Endothelial cell of umbilical vein (primary cell): ENCODE measurements at regions of chr20 and their contacts with region 1.

Region 1: DNA sequence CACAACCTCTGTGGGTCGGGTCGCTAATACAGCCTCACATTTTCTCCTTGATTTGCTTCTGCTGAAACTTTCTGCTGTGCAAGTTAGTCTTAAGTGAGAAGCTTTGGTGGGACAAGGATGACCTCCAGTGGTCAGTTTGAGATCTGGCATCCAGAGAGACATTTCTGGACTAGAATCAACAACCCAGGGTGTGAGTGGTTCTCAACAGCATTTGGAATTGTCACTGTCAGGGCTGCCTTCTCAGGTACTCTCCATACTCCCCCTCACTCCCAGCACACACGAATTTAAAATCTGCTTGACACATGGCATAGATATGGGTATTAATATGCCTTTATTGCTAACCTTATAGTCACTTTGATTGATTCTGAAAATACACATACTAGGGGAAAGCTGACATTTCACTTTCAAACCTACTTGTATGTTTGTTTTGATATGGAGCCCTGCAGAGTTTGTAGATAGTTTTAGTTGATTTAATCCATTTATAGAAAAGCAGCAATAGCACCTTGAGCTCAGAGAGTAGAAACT is 13.2 kb downstream of the OTOR start:
- DNase-seq: peak; percentile 65
- H3K4me3 ChIP-seq: no peak overlapping the region
- H3K27ac ChIP-seq: no peak overlapping the region
- H3K4me1 ChIP-seq: no peaks in the 10 kb centered on the region
- H3K27me3 ChIP-seq: no peaks in the 10 kb centered on the region
- CTCF ChIP-seq: peak; percentile 60 to 64
- POLR2A ChIP-seq: no peak

Region 2: DNA sequence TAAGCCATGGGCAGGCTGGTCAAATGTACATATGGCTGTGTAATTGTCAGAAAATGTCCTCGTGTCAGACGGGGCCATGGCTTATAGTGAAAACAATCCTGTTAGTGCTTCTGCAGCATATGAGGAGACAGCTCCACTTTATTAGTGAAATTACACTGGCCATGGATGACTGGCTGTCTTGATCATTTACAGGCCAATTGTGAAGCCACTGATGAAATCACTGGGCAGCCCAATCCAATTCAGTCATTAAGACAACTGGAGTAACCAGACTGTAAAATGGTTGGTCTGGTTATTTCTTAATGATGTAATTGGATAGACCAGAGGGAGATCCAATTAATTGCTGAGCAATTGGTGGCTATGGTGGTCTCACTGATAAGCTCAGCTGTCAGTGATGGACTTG is 937.6 kb before region 1 on chr20:
- CTCF ChIA-PET with region 1: no interaction called
- POLR2A ChIA-PET with region 1: no interaction called
- dilution Hi-C with region 1: no loop called
- intact Hi-C with region 1: no loop called
- DNase-seq: no peak
- H3K4me3 ChIP-seq: no peak overlapping the region
- H3K27ac ChIP-seq: no peak overlapping the region
- H3K4me1 ChIP-seq: no peaks in the 10 kb centered on the region
- H3K27me3 ChIP-seq: no peaks in the 10 kb centered on the region
- CTCF ChIP-seq: no peak
- POLR2A ChIP-seq: no peak

Region 3: DNA sequence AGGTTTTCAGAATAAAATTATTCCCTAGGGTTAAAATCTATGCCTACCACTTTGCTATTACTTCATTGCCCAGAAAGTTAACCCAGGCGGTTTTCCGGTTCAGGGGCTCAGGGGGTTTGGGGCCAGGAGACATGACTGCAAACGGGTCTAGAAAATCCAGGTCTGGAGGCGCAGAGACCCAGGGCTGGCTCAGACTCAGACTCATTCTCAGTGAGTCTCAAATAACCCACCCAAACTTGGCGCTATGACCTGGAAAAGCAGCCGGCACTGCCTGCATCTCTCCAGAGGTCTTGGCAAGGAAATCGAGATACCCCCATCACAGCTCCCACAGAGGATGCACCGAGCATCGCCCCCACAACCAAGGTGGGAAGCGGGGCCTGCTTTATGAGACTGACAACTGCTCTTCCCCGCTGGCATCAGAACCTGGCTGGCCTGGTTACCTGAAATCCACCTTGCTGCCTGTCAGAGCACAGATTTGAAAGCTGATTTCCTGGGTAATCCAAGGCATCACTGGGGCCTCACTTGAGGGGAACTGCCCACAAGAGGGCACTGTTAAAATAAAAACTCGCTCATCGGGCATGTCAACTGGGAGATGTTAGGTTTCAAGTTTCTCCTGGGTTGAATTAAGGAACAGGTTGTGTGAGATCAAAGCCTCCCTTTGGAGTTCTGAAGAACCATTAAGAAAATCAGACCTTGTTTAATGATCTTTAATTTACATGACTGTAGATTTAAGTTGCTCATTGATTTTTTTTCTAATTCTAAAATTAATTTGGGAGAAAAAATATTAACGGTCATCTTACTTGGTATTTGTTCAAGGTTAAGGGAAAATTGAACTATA is 243.2 kb before region 1 on chr20:
- CTCF ChIA-PET with region 1: interaction called, 38 read pairs
- POLR2A ChIA-PET with region 1: no interaction called
- dilution Hi-C with region 1: no loop called
- intact Hi-C with region 1: loop called (anchors 1 kb)
- DNase-seq: peak; percentile 13
- H3K4me3 ChIP-seq: no peak overlapping the region
- H3K27ac ChIP-seq: no peak overlapping the region
- H3K4me1 ChIP-seq: no peaks in the 10 kb centered on the region
- H3K27me3 ChIP-seq: no peaks in the 10 kb centered on the region
- CTCF ChIP-seq: peak; percentile 49 to 53
- POLR2A ChIP-seq: no peak

Region 4: DNA sequence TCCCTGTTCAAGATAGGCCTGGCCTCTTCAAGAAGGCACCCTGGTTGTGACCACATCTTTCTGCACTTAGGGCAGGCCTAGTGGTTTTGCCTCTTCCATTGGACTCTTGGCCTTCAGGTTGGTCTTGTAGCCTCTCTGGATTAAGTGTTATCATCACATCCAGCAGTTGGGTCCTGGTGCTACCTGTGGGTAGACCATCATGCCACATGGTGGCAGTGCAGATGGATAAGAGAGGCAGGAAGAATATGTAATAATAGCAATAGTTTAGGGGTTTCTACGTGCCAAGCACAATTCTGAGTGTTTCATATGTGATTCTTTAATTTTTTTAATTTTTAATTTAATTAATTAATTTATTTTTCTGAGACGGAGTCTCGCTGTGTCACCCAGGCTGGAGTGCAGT is 60.1 kb before region 1 on chr20:
- CTCF ChIA-PET with region 1: no interaction called
- POLR2A ChIA-PET with region 1: no interaction called
- dilution Hi-C with region 1: no loop called
- intact Hi-C with region 1: loop called (anchors 1 kb)
- DNase-seq: peak; percentile 14
- H3K4me3 ChIP-seq: no peak overlapping the region
- H3K27ac ChIP-seq: no peak overlapping the region
- H3K4me1 ChIP-seq: no peaks in the 10 kb centered on the region
- H3K27me3 ChIP-seq: no peaks in the 10 kb centered on the region
- CTCF ChIP-seq: peak in 1 of 2 donors; percentile 16
- POLR2A ChIP-seq: no peak